ENCODE measurements at regions of chr2 and their contacts with region 1.

Region 1: GRCh38 chr2:164430166-164430783 is 191.0 kb downstream of the GRB14 start:
- DNase-seq: peak; percentile 60
- H3K4me3 Mint-ChIP-seq: no peak overlapping the region
- H3K27ac Mint-ChIP-seq: no peak overlapping the region
- H3K4me1 Mint-ChIP-seq: peaks cover under 1% of the 10 kb centered on the region
- H3K27me3 Mint-ChIP-seq: no peaks in the 10 kb centered on the region
- CTCF ChIP-seq: peak; percentile 59

Region 2: GRCh38 chr2:163155279-163155883 is 1274.9 kb before region 1 on chr2:
- CTCF ChIA-PET with region 1: interaction called, 3 read pairs
- POLR2A ChIA-PET with region 1: no interaction called
- intact Hi-C with region 1: loop called (anchors 1 kb)
- DNase-seq: peak; percentile 61
- H3K4me3 Mint-ChIP-seq: no peak overlapping the region
- H3K27ac Mint-ChIP-seq: no peak overlapping the region
- H3K4me1 Mint-ChIP-seq: peaks cover 16% of the 10 kb centered on the region
- H3K27me3 Mint-ChIP-seq: no peaks in the 10 kb centered on the region
- CTCF ChIP-seq: peak; percentile 81

Region 3: GRCh38 chr2:163191372-163191771 is 1238.9 kb before region 1 on chr2:
- CTCF ChIA-PET with region 1: interaction called, 7 read pairs
- POLR2A ChIA-PET with region 1: no interaction called
- intact Hi-C with region 1: loop called (anchors 2 kb)
- DNase-seq: peak; percentile 64
- H3K4me3 Mint-ChIP-seq: no peak overlapping the region
- H3K27ac Mint-ChIP-seq: no peak overlapping the region
- H3K4me1 Mint-ChIP-seq: peaks cover 8% of the 10 kb centered on the region
- H3K27me3 Mint-ChIP-seq: no peaks in the 10 kb centered on the region
- CTCF ChIP-seq: peak; percentile 78

Region 4: GRCh38 chr2:163471947-163472346 is 958.3 kb before region 1 on chr2:
- CTCF ChIA-PET with region 1: interaction called, 3 read pairs
- POLR2A ChIA-PET with region 1: no interaction called
- intact Hi-C with region 1: loop called (anchors 1 kb)
- DNase-seq: peak; percentile 29
- H3K4me3 Mint-ChIP-seq: no peak overlapping the region
- H3K27ac Mint-ChIP-seq: no peak overlapping the region
- H3K4me1 Mint-ChIP-seq: peaks cover 6% of the 10 kb centered on the region
- H3K27me3 Mint-ChIP-seq: no peaks in the 10 kb centered on the region
- CTCF ChIP-seq: peak; percentile 60

Region 5: DNA sequence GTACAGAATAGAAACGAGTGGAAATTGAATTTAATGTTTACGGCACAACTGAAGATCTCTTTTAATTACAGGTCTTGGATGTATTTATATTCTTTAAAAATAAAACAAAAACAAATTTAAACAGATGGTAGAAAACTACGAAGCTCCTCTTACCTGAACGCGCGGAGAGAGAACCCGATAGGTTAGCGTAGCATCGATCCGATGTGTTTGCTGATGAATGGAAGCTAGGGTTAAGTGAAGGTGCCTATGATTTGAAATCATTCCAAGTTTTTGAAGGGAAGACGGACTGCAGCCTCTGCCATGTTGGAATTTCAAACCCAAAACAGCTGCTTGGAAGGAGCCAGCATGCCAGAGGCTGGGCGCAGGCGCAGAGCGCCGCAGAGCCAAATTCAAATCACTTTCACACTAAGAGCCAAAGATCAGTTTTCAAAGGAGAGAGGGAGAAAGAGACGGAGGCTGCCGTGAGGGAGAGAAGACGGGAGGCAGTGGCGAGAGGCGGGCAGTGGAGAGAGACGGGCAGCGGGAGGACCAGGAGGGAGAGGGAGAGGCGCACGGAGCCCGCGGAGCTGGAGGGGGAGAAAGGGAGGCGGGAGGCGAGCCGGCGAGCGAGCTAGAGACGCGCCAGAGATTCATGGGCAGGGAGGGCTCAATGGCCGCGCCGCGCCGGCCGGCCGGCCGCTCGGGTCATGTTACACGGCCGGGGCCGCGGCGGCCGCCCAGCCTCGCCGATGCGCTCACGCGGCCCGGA is 694.4 kb before region 1 on chr2 and contains the start of gene FIGN:
- CTCF ChIA-PET with region 1: interaction called, 3 read pairs
- POLR2A ChIA-PET with region 1: no interaction called
- intact Hi-C with region 1: loop called (anchors 5 kb)
- DNase-seq: peak; percentile 79
- H3K4me3 Mint-ChIP-seq: peak within 1 kb of the TSS; percentile 86
- H3K27ac Mint-ChIP-seq: peak within 1 kb of the TSS; percentile 95
- H3K4me1 Mint-ChIP-seq: peaks cover 14% of the 10 kb centered on the region
- H3K27me3 Mint-ChIP-seq: no peaks in the 10 kb centered on the region
- CTCF ChIP-seq: no peak
- total RNA-seq, gene FIGN: 9.0 and 11.7 TPM in 2 replicates

Region 6: DNA sequence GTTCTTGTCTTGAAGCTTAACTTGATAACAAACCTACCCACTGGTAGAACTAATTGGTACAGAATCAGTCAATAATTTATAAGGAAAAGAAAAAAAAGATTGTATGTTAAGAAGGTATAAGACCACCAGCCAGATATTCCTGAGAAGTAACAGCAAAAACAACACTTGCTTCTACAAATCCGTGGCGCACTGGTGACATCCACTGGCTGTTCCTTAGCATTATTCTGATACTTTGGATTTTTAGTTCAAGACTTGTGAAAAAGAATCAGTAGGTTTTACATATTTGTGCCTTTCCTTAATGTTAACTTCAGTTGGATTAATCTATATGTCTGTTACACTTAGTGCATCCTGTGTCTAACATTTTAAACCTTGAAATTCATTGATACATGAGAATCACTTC is 49.2 kb after region 1 on chr2:
- CTCF ChIA-PET with region 1: interaction called, 3 read pairs
- POLR2A ChIA-PET with region 1: no interaction called
- intact Hi-C with region 1: loop called (anchors 5 kb)
- DNase-seq: peak; percentile 42
- H3K4me3 Mint-ChIP-seq: no peak overlapping the region
- H3K27ac Mint-ChIP-seq: no peak overlapping the region
- H3K4me1 Mint-ChIP-seq: no peaks in the 10 kb centered on the region
- H3K27me3 Mint-ChIP-seq: no peaks in the 10 kb centered on the region
- CTCF ChIP-seq: peak; percentile 59

Region 7: GRCh38 chr2:164538240-164538866 is 108.1 kb after region 1 on chr2:
- CTCF ChIA-PET with region 1: interaction called, 5 read pairs
- POLR2A ChIA-PET with region 1: no interaction called
- intact Hi-C with region 1: loop called (anchors 5 kb)
- DNase-seq: peak; percentile 62
- H3K4me3 Mint-ChIP-seq: no peak overlapping the region
- H3K27ac Mint-ChIP-seq: no peak overlapping the region
- H3K4me1 Mint-ChIP-seq: peaks cover 12% of the 10 kb centered on the region
- H3K27me3 Mint-ChIP-seq: no peaks in the 10 kb centered on the region
- CTCF ChIP-seq: peak; percentile 82

Measured in MCF 10A (cell line).